CD4-positive, alpha-beta T cell (primary cell): ENCODE measurements at regions of chr20 and their contacts with region 1.

Region 1: DNA sequence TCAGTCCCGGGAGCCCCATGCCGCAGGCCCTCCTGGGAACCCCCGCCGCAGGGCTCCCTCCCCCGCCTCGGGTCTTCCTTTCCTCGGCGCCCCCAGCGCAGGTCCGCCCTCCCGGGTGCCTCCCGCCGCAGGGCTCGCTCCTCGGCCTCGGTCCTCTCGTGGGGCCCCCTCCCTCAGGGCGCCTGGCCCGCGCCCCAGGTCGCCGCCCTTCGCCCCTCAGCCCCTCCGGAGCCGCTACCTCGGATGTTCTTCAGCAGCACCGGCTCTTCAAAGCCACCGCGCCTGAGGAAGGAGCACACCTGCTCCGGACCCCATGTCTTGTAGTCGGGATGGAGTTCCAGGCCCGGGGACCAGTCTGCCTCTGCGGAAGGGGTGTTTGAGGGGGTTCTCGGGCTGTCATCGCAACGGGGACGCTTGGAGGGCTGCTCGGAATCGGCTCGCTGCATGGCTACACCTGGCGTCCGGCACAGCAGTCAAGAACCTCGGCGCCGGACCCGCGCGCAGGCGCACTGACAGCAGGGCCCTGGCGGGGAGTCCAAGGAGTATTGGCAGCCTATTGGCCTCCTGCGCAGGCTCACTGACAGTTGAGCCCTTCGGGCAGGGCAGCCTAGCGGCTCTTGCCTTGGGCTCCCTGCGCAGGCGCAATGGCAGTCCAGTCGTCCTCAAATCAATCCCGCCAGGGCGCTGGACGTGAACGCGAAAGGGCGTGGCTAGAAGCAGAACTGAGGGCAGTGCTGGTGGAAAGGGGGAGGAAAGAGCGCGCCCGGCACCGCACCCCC is at the start of gene SAMHD1:
- DNase-seq: peak; percentile 68 to 95 (median 81)
- ATAC-seq: peak; percentile 70
- H3K4me3 ChIP-seq: peak within 1 kb of the TSS; percentile 86
- H3K4me3 Mint-ChIP-seq: peak within 1 kb of the TSS; percentile 100
- H3K27ac ChIP-seq: peak within 1 kb of the TSS; percentile 82 to 95
- H3K27ac Mint-ChIP-seq: peak within 1 kb of the TSS; percentile 94
- H3K4me1 ChIP-seq: peaks cover 60% of the 10 kb centered on the region
- H3K4me1 Mint-ChIP-seq: peaks cover 53% of the 10 kb centered on the region
- H3K27me3 ChIP-seq: no peaks in the 10 kb centered on the region
- H3K27me3 Mint-ChIP-seq: no peaks in the 10 kb centered on the region
- CTCF ChIP-seq: no peak
- total RNA-seq, gene SAMHD1: 232 to 239 TPM

Region 2: GRCh38 chr20:36969478-36970186 is 18.2 kb after region 1 on chr20:
- CTCF ChIA-PET with region 1: interaction called, 6 read pairs
- POLR2A ChIA-PET with region 1: interaction called, 16 read pairs
- intact Hi-C with region 1: loop called (anchors 2 kb)
- DNase-seq: peak in 13 of 14 experiments; percentile 23 to 71 (median 40)
- ATAC-seq: peak; percentile 74
- H3K4me3 ChIP-seq: peak overlapping the region; percentile 13
- H3K4me3 Mint-ChIP-seq: peak overlapping the region; percentile 72
- H3K27ac ChIP-seq: peak overlapping the region; percentile 45 to 74
- H3K27ac Mint-ChIP-seq: peak overlapping the region; percentile 96
- H3K4me1 ChIP-seq: peaks cover 79% of the 10 kb centered on the region
- H3K4me1 Mint-ChIP-seq: peaks cover 73% of the 10 kb centered on the region
- H3K27me3 ChIP-seq: no peaks in the 10 kb centered on the region
- H3K27me3 Mint-ChIP-seq: no peaks in the 10 kb centered on the region
- CTCF ChIP-seq: no peak

Region 3: DNA sequence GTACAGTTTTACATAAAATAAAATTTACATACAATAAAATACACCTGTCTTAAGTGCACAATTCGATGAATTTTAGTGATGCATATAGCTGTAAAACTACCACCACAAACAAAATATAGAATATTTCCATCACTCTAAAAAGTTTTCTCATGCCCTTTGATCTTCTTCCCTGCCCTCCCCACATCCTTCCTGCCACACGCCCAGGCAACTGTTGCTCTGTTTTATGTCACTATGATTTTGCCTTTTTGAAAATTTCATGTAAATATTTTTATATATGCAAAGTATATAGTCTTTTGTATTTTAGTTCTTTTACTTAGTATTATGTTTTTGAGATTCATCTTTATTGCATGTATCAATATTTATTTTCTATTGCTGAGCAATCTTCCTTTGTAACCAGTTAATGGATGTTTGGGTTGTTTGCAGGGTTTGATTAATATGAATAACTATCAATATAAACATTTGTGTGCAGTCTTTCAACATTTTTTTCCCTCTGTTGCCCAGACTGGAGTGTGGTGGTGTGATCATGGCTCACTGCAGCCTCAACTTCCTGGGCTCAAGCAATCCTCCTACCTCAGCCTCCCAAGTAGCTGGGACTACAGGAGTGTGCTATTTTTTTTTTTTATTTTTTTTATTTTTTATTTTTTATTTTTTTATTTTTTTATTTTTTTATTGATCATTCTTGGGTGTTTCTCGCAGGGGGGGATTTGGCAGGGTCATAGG is 23.9 kb after region 1 on chr20:
- CTCF ChIA-PET with region 1: no interaction called
- POLR2A ChIA-PET with region 1: interaction called, 16 read pairs
- intact Hi-C with region 1: loop called in 1 of 2 experiments (anchors 2 kb)
- DNase-seq: peak; percentile 32 to 89 (median 60)
- ATAC-seq: peak; percentile 83
- H3K4me3 ChIP-seq: peak overlapping the region; percentile 5
- H3K4me3 Mint-ChIP-seq: peak overlapping the region; percentile 30
- H3K27ac ChIP-seq: peak overlapping the region; percentile 56 to 59
- H3K27ac Mint-ChIP-seq: peak overlapping the region; percentile 79
- H3K4me1 ChIP-seq: peaks cover 51% of the 10 kb centered on the region
- H3K4me1 Mint-ChIP-seq: peaks cover 38% of the 10 kb centered on the region
- H3K27me3 ChIP-seq: no peaks in the 10 kb centered on the region
- H3K27me3 Mint-ChIP-seq: no peaks in the 10 kb centered on the region
- CTCF ChIP-seq: no peak

Region 4: GRCh38 chr20:36988494-36988966 is 37.1 kb after region 1 on chr20:
- CTCF ChIA-PET with region 1: interaction called, 5 read pairs
- POLR2A ChIA-PET with region 1: interaction called, 4 read pairs
- intact Hi-C with region 1: loop called in 1 of 2 experiments (anchors 5 kb)
- DNase-seq: peak in 11 of 14 experiments; percentile 9 to 64 (median 26)
- ATAC-seq: peak; percentile 93
- H3K4me3 ChIP-seq: no peak overlapping the region
- H3K4me3 Mint-ChIP-seq: peak overlapping the region; percentile 26
- H3K27ac ChIP-seq: peak overlapping the region; percentile 23 to 54
- H3K27ac Mint-ChIP-seq: peak overlapping the region; percentile 88
- H3K4me1 ChIP-seq: peaks cover 32% of the 10 kb centered on the region
- H3K4me1 Mint-ChIP-seq: peaks cover 54% of the 10 kb centered on the region
- H3K27me3 ChIP-seq: no peaks in the 10 kb centered on the region
- H3K27me3 Mint-ChIP-seq: no peaks in the 10 kb centered on the region
- CTCF ChIP-seq: no peak

Region 5: GRCh38 chr20:37081717-37082289 is 130.4 kb after region 1 on chr20:
- CTCF ChIA-PET with region 1: no interaction called
- POLR2A ChIA-PET with region 1: interaction called, 3 read pairs
- intact Hi-C with region 1: loop called (anchors 5 kb)
- DNase-seq: peak; percentile 37 to 77 (median 54)
- ATAC-seq: peak; percentile 86
- H3K4me3 ChIP-seq: no peak overlapping the region
- H3K4me3 Mint-ChIP-seq: no peak overlapping the region
- H3K27ac ChIP-seq: peak overlapping the region in 1 of 2 donors; percentile 16
- H3K27ac Mint-ChIP-seq: peak overlapping the region; percentile 48
- H3K4me1 ChIP-seq: peaks cover 10% of the 10 kb centered on the region
- H3K4me1 Mint-ChIP-seq: peaks cover 25% of the 10 kb centered on the region
- H3K27me3 ChIP-seq: no peaks in the 10 kb centered on the region
- H3K27me3 Mint-ChIP-seq: no peaks in the 10 kb centered on the region
- CTCF ChIP-seq: peak; percentile 88